ENCODE measurements at regions of chr1 and their contacts with region 1.

Region 1: DNA sequence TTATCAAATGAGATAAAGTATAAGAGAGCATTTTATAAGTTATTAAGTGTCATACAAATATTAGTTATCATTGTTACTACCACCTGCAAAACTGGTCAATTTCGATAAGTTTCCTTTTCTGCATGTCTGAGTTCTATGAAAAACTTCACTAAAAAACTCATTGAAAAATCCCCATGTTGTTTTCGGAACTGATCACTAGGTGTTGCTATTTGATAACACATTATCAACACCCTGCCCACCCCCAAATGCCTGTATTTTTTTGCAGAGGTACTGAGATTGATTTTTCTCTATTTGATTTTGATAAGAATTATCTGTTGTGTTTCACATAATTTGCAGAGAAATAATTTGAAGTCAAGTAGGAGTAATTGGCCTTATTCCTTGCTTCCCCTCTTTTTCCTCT is 22.1 kb upstream of the DISP1 start:
- DNase-seq: no peak
- ATAC-seq: peak in 1 of 2 donors; percentile 30
- H3K4me3 ChIP-seq: no peak overlapping the region
- H3K27ac ChIP-seq: no peak overlapping the region
- H3K4me1 ChIP-seq: no peaks in the 10 kb centered on the region
- H3K27me3 ChIP-seq: no peaks in the 10 kb centered on the region
- CTCF ChIP-seq: peak; percentile 27 to 61 (median 56)
- POLR2A ChIP-seq: no peak

Region 2: GRCh38 chr1:222375701-222376100 is 417.0 kb before region 1 on chr1:
- in situ Hi-C with region 1: no loop called
- intact Hi-C with region 1: no loop called
- DNase-seq: no peak
- ATAC-seq: no peak
- H3K4me3 ChIP-seq: no peak overlapping the region
- H3K27ac ChIP-seq: no peak overlapping the region
- H3K4me1 ChIP-seq: no peaks in the 10 kb centered on the region
- H3K27me3 ChIP-seq: no peaks in the 10 kb centered on the region
- CTCF ChIP-seq: no peak
- POLR2A ChIP-seq: no peak

Region 3: DNA sequence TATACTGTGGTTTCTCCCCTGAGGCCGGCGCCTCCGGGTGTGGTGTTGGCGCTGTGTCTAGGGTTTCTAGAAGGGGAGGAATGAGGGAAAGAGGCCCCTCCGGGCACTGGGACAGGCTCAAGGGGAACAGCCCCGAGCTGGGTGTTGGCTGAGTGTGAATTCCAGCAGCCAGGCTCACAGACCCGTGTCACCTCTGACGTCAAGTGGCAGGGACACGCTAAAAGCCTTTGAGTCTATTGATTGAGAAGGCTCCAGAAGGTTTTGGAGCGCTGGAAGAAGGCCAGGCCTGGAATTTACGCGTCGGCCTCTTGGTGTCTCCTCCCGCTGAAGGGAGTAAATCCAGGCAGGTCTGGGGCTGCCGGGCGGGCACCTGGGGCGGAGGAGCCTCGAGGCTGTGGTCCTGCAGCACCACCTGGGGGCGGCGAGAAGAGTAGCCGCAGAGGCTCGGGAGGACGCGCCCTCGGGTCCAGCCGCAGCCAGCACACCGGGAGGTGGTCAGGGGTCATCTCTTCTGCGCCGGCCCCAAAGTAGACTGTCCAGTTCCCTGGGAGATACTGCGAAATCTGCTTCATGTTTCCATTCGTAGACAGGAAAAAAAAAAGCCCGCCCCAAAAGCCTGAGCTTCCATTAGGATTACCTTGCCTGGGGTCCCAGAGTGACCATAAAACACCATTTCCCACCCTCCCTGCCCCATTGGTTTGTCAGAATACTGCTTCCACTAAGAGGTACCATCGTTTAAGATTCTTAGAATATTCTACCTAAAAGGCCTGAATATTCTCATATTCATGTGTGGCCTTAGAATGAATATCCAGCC is 288.6 kb after region 1 on chr1:
- in situ Hi-C with region 1: loop called in 2 of 4 experiments (anchors 5 to 10 kb)
- intact Hi-C with region 1: loop called (anchors 1 kb)
- DNase-seq: peak; percentile 60 to 72
- ATAC-seq: peak; percentile 85 to 95
- H3K4me3 ChIP-seq: peak overlapping the region; percentile 36 to 77 (median 48)
- H3K27ac ChIP-seq: peak overlapping the region; percentile 29 to 61 (median 46)
- H3K4me1 ChIP-seq: no peaks in the 10 kb centered on the region
- H3K27me3 ChIP-seq: no peaks in the 10 kb centered on the region
- CTCF ChIP-seq: peak; percentile 92 to 98 (median 96)
- POLR2A ChIP-seq: no peak

Region 4: DNA sequence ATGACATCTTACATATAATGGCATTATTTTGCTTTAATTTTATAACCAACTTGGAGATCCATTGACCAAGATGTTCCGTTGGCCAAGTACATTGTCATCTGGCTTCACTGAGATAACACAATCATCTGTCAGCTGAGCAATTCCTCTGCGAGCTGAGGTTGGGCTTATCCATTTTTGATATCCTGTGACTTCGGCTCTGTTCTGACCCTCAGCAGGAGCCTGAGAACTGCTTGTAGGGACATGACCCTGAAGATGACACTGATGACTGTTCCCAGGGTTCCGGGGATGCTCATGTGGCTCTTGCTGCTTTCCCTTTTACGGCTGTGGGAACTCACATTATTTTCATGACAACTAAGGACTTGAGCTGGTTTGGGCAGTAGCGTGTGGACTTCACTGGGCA is 299.2 kb after region 1 on chr1:
- in situ Hi-C with region 1: loop called in 3 of 4 experiments (anchors 5 to 10 kb)
- intact Hi-C with region 1: no loop called
- DNase-seq: no peak
- ATAC-seq: no peak
- H3K4me3 ChIP-seq: no peak overlapping the region
- H3K27ac ChIP-seq: no peak overlapping the region
- H3K4me1 ChIP-seq: no peaks in the 10 kb centered on the region
- H3K27me3 ChIP-seq: no peaks in the 10 kb centered on the region
- CTCF ChIP-seq: no peak
- POLR2A ChIP-seq: no peak

Region 5: DNA sequence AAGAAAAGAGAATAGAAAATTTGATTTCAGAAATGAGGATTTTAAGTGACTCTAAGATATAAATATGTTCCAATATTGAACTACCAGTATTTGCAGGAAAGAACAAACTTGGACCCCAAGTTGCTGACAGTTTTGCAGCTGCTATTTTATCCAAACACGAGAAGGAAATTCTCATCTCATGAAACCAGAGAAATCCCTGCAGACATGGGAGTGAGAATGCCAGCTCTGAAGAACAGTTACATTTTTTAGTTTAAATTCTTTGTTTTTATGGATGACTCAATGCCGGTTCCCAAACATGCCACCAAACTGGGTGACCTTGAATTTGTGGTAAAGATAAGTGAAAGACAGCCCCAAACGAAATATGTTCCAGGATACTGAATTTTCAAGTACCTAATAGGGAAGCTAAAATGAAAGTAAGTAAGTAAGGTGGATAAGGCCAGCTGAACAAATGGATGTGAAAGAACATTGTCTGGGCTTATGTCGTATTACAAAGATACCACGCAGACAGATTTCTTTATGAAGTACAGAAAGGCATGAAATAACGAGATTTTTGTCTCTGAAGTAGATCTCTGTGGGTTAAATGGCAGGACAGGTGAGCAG is 330.4 kb after region 1 on chr1:
- in situ Hi-C with region 1: no loop called
- intact Hi-C with region 1: loop called (anchors 2 kb)
- DNase-seq: no peak
- ATAC-seq: no peak
- H3K4me3 ChIP-seq: no peak overlapping the region
- H3K27ac ChIP-seq: no peak overlapping the region
- H3K4me1 ChIP-seq: no peaks in the 10 kb centered on the region
- H3K27me3 ChIP-seq: no peaks in the 10 kb centered on the region
- CTCF ChIP-seq: no peak
- POLR2A ChIP-seq: no peak

Measured in gastrocnemius medialis (tissue), 4 donors.